Mammary epithelial cell (primary cell): ENCODE measurements at regions of chr7 and their contacts with region 1.

Region 1: DNA sequence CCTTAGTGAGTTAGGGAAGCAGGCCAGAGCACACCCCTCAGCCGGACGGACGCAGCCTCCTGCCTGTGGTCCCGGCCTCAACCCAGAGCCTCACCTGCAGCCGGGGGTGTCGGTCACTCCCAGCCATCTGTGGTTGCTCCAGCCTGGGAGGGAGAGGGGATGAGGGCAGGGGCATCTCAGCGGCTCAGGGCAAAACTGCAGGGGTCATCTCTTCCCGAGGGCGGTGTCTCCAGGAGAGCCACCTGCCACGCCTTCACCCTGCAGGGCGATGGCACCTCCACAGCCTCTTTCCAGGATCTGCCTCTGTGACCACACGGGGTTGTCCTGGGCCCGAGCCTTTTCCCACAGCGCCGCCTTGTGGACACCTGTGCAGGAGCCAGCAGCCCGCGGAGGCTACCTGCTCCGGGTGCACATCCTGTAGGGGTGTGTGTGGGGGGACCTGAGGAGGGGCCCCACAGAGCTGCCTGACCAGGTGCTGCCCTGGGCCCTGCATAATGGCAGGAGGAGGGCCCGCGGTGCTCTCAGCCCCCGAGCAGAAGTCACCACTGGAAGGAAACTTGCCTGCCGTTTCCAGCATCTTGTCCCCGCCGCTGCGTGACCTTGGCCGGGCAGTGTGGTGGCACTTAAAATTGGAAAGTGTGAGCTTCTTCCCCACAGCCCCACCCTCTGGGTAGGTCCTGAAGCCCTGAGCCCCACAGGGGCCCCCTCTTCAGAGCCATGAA is 21.6 kb upstream of the AP5Z1 start:
- DNase-seq: peak; percentile 59
- H3K4me3 ChIP-seq: no peak overlapping the region
- H3K27ac ChIP-seq: no peak overlapping the region
- H3K4me1 ChIP-seq: no peaks in the 10 kb centered on the region
- H3K27me3 ChIP-seq: no peaks in the 10 kb centered on the region
- CTCF ChIP-seq: peak; percentile 84 to 95

Region 2: GRCh38 chr7:4715410-4715776 is 38.5 kb before region 1 on chr7:
- CTCF ChIA-PET with region 1: no interaction called
- dilution Hi-C with region 1: no loop called
- in situ Hi-C with region 1: no loop called
- intact Hi-C with region 1: loop called (anchors 2 kb)
- DNase-seq: peak; percentile 89
- H3K4me3 ChIP-seq: peak overlapping the region; percentile 9 to 29 (median 24)
- H3K27ac ChIP-seq: peak overlapping the region; percentile 21
- H3K4me1 ChIP-seq: peaks cover 17% of the 10 kb centered on the region
- H3K27me3 ChIP-seq: no peaks in the 10 kb centered on the region
- CTCF ChIP-seq: no peak